ENCODE measurements at regions of chr15 and their contacts with region 1.

Region 1: GRCh38 chr15:81265944-81266775 is 57.8 kb downstream of the STARD5 start:
- DNase-seq: peak; percentile 61
- H3K4me3 ChIP-seq: no peak overlapping the region
- H3K27ac ChIP-seq: no peak overlapping the region
- H3K27me3 ChIP-seq: peaks cover 2% of the 10 kb centered on the region
- CTCF ChIP-seq: peak; percentile 95

Region 2: DNA sequence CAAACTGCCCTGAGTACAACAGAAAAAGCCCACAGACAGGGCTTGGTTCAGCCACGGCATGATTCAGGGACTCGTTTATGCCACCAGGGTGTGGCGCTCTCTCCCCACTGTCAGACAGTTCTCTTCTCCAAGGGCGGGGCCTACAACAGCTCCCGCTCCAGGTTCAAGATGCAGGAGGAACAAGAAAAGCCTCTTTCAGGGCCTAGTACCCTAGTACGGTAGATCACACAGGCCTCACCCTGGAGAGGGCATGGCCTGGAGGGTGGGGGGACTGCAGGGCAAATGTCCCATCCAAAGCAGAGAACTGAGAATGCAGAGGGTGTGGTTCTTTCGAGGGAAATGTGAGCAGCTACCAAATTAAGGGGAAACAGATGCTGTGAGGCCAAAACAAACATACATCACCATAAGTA is 288.5 kb before region 1 on chr15:
- CTCF ChIA-PET with region 1: interaction called, 45 read pairs
- POLR2A ChIA-PET with region 1: no interaction called
- DNase-seq: no peak
- H3K4me3 ChIP-seq: no peak overlapping the region
- H3K27ac ChIP-seq: no peak overlapping the region
- H3K27me3 ChIP-seq: no peaks in the 10 kb centered on the region
- CTCF ChIP-seq: peak; percentile 47

Region 3: DNA sequence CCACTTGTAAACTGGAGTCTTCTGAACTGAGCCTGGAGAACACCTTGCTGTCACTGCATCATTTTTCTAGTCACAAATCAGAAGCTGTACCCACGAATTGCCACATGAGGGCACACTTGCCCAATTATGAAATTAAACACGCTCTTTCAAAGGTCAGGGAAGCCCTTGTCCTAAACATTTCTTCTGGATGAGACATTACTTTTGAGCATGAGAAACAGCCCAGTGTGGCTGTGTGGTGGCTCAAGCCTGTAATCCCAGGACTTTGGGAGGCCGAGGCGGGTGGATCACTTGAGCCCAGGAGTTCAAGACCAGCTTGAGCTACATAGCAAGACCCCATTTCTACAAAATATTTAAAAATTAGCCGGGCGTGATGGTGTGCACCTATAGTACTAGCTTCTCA is 159.6 kb before region 1 on chr15:
- CTCF ChIA-PET with region 1: interaction called, 728 read pairs
- POLR2A ChIA-PET with region 1: interaction called, 3 read pairs
- DNase-seq: peak; percentile 63
- H3K4me3 ChIP-seq: no peak overlapping the region
- H3K27ac ChIP-seq: no peak overlapping the region
- H3K27me3 ChIP-seq: peaks cover 13% of the 10 kb centered on the region
- CTCF ChIP-seq: peak; percentile 75

Region 4: GRCh38 chr15:81174792-81175327 is 91.3 kb before region 1 on chr15:
- CTCF ChIA-PET with region 1: interaction called, 66 read pairs
- POLR2A ChIA-PET with region 1: no interaction called
- DNase-seq: no peak
- H3K4me3 ChIP-seq: no peak overlapping the region
- H3K27ac ChIP-seq: no peak overlapping the region
- H3K27me3 ChIP-seq: peaks cover 2% of the 10 kb centered on the region
- CTCF ChIP-seq: peak; percentile 10; the same call in 1 of the 2 replicates

Region 5: DNA sequence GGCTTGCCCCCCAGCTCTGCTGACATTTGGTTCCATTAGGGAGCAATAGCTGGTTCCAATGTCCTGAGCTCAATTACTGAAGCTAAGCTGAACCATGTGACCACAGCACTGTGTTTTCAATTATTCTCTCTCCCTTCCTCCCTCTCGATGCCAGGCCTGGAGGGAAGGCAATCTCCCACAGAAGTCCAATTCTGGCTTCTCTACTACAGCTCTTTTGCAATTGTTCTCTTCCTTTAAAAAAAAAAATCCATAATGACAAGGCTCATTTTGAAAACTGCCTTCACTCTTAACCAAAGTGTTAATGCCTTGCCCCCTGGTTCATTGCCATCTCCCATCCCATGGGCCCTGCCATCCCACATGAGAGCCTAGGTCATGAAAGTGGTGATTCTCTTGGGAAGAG is 44.7 kb before region 1 on chr15:
- CTCF ChIA-PET with region 1: interaction called, 27 read pairs
- POLR2A ChIA-PET with region 1: no interaction called
- DNase-seq: no peak
- H3K4me3 ChIP-seq: no peak overlapping the region
- H3K27ac ChIP-seq: no peak overlapping the region
- H3K27me3 ChIP-seq: peaks cover 2% of the 10 kb centered on the region
- CTCF ChIP-seq: no peak

Region 6: DNA sequence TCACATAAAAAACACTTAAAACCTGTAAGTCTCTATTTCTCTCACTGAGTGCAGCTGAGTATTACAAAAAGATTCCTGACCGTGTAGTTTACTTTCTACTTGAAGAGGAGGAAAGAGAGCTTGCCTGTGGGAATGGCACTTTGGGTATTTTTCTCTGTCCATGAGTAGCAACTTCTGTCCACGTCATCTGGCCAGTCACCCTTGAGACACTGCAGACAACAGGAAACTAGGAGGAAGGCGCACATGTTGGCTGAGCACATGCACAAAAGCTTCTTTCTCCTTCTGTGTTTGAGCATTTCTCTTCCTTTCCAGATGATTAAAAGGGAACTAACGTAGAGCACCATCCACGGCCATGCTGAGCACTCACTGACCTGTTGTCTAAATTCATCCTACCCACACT is 38.1 kb after region 1 on chr15:
- CTCF ChIA-PET with region 1: interaction called, 14 read pairs
- POLR2A ChIA-PET with region 1: no interaction called
- DNase-seq: no peak
- H3K4me3 ChIP-seq: no peak overlapping the region
- H3K27ac ChIP-seq: peak overlapping the region; percentile 61
- H3K27me3 ChIP-seq: no peaks in the 10 kb centered on the region
- CTCF ChIP-seq: no peak

Region 7: DNA sequence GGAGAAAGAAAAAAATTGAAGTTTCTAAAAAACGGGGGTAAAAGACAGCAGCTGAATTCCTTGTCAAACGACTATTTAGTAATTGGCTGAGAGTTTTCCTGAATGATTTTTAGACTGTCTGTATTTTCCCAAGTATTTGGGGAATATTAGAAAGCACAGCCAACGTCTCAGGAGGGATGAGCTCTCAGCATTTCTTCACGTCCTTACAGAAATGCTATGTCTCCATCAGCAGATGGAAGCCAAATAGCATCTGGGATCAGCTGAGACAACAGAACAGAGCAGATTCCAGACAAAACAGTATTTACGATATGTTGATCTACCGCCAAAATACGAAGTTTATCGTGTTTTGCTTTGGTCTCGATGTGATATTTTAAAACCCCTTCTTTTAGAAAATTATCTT is 113.1 kb after region 1 on chr15:
- CTCF ChIA-PET with region 1: no interaction called
- POLR2A ChIA-PET with region 1: no interaction called
- DNase-seq: no peak
- H3K4me3 ChIP-seq: no peak overlapping the region
- H3K27ac ChIP-seq: no peak overlapping the region
- H3K27me3 ChIP-seq: peaks cover 21% of the 10 kb centered on the region
- CTCF ChIP-seq: no peak

Region 8: GRCh38 chr15:81410318-81410753 is 144.2 kb after region 1 on chr15:
- CTCF ChIA-PET with region 1: interaction called, 17 read pairs
- POLR2A ChIA-PET with region 1: no interaction called
- DNase-seq: peak; percentile 37
- H3K4me3 ChIP-seq: no peak overlapping the region
- H3K27ac ChIP-seq: no peak overlapping the region
- H3K27me3 ChIP-seq: peaks cover 17% of the 10 kb centered on the region
- CTCF ChIP-seq: peak; percentile 57

Region 9: GRCh38 chr15:81589671-81590070 is 323.5 kb after region 1 on chr15:
- CTCF ChIA-PET with region 1: no interaction called
- POLR2A ChIA-PET with region 1: no interaction called
- DNase-seq: no peak
- H3K4me3 ChIP-seq: no peak overlapping the region
- H3K27ac ChIP-seq: no peak overlapping the region
- H3K27me3 ChIP-seq: no peaks in the 10 kb centered on the region
- CTCF ChIP-seq: no peak